Activated CD4-positive, alpha-beta T cell treated with anti-CD3 and anti-CD28 coated beads for 36 hours (primary cell): ENCODE measurements at regions of chr1 and their contacts with region 1.

Region 1: GRCh38 chr1:235328357-235329138 is at the start of gene GGPS1:
- DNase-seq: peak; percentile 99
- ATAC-seq: peak; percentile 84
- H3K4me3 Mint-ChIP-seq: no peak within 1 kb of the TSS
- H3K27ac Mint-ChIP-seq: no peak within 1 kb of the TSS
- H3K4me1 Mint-ChIP-seq: peaks cover 42% of the 10 kb centered on the region
- H3K27me3 Mint-ChIP-seq: no peaks in the 10 kb centered on the region
- total RNA-seq, gene GGPS1: 35.6 to 37.4 TPM

Region 2: GRCh38 chr1:234486498-234487448 is 841.8 kb before region 1 on chr1:
- CTCF ChIA-PET with region 1: no interaction called
- POLR2A ChIA-PET with region 1: no interaction called
- intact Hi-C with region 1: loop called in 1 of 2 experiments (anchors 5 kb)
- DNase-seq: peak; percentile 61
- ATAC-seq: peak; percentile 16
- H3K4me3 Mint-ChIP-seq: no peak overlapping the region
- H3K27ac Mint-ChIP-seq: peak overlapping the region; percentile 98
- H3K4me1 Mint-ChIP-seq: peaks cover 43% of the 10 kb centered on the region
- H3K27me3 Mint-ChIP-seq: peaks cover 16% of the 10 kb centered on the region

Region 3: DNA sequence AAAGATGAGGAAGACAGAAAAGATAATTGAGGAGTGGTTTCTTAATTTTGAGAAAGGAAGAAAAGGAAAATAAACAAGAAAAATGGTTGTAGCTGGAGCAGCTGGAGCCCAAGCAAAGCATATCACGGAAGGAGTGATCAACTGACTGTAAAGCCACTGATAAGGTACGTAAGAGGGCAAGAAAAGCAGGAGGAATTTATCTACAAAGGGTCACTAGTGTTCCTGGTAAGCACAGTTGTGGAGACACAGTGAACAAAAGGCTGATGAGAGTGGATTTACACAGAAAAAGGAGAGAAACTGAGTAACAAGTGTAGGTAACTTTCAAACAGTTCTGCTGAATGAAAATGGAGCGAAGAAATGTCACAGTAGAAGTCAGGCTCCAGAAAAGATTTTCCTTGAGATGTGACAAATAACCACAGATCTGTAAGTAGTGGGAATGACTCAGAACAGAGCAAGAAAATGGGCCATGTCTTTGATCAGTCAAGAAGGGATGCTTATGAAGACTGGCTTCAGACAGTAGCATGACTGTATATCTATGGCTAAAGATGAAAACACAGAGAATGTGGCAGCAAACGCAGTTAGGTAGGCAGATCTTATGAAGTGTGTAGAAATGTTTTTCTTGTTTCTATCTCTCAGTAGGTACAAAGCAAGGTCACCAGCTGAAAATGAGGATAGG is 121.9 kb before region 1 on chr1:
- CTCF ChIA-PET with region 1: no interaction called
- POLR2A ChIA-PET with region 1: no interaction called
- intact Hi-C with region 1: loop called in 1 of 2 experiments (anchors 1 kb)
- DNase-seq: peak; percentile 25
- ATAC-seq: peak; percentile 98
- H3K4me3 Mint-ChIP-seq: peak overlapping the region; percentile 12
- H3K27ac Mint-ChIP-seq: peak overlapping the region; percentile 92
- H3K4me1 Mint-ChIP-seq: peaks cover 29% of the 10 kb centered on the region
- H3K27me3 Mint-ChIP-seq: no peaks in the 10 kb centered on the region

Region 4: GRCh38 chr1:235297579-235297978 is 31.0 kb before region 1 on chr1:
- CTCF ChIA-PET with region 1: interaction called, 4 read pairs
- POLR2A ChIA-PET with region 1: interaction called, 4 read pairs
- intact Hi-C with region 1: loop called in 1 of 2 experiments (anchors 1 kb)
- DNase-seq: no peak
- ATAC-seq: peak; percentile 72
- H3K4me3 Mint-ChIP-seq: peak overlapping the region; percentile 59
- H3K27ac Mint-ChIP-seq: peak overlapping the region; percentile 87
- H3K4me1 Mint-ChIP-seq: peaks cover 64% of the 10 kb centered on the region
- H3K27me3 Mint-ChIP-seq: no peaks in the 10 kb centered on the region

Region 5: DNA sequence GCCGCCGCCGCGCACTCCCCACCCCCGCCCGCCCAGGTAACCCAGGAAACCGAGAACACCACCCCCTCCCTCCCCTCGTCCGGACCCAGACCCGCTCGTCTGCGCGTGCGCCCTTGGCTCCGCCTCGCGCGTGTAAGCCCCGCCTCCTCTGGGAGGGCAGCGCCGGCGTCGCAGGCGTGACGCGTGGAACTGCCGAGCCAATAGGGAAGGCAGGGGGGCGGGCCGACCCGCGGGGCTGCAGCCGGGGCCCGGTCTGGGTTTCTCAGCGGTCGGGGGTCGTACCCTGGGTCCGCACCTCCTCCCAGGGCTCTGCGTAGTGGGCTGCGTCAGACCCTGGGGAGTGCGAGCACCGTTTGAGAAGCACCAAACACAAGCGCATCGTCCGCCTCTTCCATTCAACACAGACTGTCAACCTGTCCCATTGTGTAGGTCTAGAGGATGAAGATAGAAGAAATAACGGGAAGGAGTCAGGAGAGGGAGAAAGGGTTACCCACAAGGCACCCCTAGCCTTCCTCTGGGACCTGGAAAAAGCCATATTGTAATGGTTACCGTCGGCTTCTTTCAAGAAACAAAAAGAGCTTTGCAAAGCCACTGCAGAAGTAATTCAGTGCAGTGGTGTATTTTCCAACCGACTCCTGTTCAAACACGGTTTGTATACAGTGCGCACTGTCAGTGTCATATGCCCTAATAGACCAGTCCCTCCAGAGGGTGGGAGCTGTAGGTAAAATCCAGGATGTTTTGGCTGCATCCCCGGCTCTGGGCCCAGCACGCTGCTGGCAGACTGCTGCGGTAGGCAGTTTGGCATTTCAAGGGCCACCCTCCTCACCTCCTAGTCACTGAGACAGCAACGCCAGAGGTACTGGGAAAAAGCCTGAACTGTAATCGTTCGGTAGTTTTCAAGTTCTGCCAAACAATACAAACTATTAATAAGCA is 538.6 kb after region 1 on chr1:
- CTCF ChIA-PET with region 1: no interaction called
- POLR2A ChIA-PET with region 1: no interaction called
- intact Hi-C with region 1: loop called (anchors 1 to 5 kb)
- DNase-seq: peak; percentile 99
- ATAC-seq: peak; percentile 76
- H3K4me3 Mint-ChIP-seq: peak overlapping the region; percentile 96
- H3K27ac Mint-ChIP-seq: peak overlapping the region; percentile 97
- H3K4me1 Mint-ChIP-seq: peaks cover 45% of the 10 kb centered on the region
- H3K27me3 Mint-ChIP-seq: no peaks in the 10 kb centered on the region